ENCODE measurements at regions of chr5 and their contacts with region 1.

Region 1: DNA sequence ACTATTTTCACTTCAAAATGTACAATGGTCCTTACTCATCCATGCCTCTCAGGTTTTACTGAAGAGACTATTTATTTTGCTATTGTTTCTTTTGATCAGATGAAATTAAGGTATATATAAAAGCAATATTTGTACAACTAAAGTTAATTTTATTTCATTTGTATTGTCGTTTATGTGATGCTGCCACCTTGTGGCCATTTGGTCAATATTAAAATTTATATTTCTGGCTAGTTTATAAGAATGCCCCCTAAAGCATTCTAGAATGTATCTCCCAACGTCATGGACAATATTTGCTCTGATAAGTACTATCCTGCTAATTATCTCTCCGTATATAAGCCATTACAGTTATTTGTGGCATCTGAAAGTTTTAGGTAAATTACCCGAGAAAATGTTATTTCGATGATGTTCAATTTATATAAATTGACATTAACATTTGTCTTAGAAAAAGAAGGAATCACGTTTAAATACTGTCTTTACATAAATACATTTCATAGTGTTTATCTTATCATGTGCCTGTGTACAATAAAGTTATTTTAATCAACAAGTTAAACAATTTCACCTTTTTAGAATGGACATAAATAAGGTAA is 680.0 kb downstream of the TAF11L14 start:
- DNase-seq: peak in 1 of 5 donors; percentile 40
- H3K4me3 ChIP-seq: no peak overlapping the region
- H3K27ac ChIP-seq: no peak overlapping the region
- H3K4me1 ChIP-seq: no peaks in the 10 kb centered on the region
- H3K27me3 ChIP-seq: no peaks in the 10 kb centered on the region
- CTCF ChIP-seq: no peak

Region 2: GRCh38 chr5:17216176-17216973 is 1097.9 kb before region 1 on chr5:
- intact Hi-C with region 1: loop called (anchors 10 kb)
- DNase-seq: peak; percentile 83 to 95 (median 89)
- H3K4me3 ChIP-seq: peak overlapping the region in 2 of 3 donors; percentile 62 to 83
- H3K27ac ChIP-seq: no peak overlapping the region
- H3K4me1 ChIP-seq: peaks cover 0 to 4% (median 2%) of the 10 kb centered on the region in 3 donors
- H3K27me3 ChIP-seq: no peaks in the 10 kb centered on the region
- CTCF ChIP-seq: peak; percentile 82